ENCODE measurements at regions of chr14 and their contacts with region 1.

Region 1: DNA sequence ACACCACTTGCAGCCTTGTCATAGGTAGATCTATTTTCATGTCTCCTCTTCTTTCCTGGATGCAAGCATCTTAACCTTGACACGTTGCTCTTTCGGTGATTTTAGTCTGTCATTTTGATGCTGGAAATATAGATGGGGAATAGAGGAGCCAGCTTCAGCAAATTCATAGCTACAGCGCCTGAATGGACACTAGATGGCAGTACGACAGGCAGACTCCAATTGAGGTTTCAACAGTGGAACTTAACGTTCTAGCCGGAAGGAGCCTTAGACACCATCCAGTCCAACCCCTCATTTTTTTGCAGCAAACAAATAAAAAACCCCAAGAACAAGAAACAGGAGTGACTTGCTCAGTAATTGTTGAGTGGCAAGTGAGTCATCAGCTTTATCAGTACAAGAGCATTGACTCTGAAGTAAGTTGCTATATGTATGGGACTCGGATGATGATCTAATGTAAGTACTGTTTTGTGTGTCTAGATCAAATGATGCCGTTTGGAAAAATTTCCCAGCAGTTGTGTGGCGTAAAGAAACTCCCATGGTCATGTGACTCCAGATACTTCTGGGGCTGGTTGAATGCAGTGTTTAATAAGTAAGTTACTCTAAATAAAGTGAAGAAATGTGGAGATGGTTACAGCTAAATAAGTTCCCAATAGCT is 9.0 kb downstream of the DMAC2L start:
- DNase-seq: no peak
- ATAC-seq: peak; percentile 100
- H3K4me3 ChIP-seq: no peak overlapping the region
- H3K27ac ChIP-seq: peak overlapping the region; percentile 31
- H3K4me1 ChIP-seq: peaks cover 14% of the 10 kb centered on the region
- H3K27me3 ChIP-seq: no peaks in the 10 kb centered on the region
- CTCF ChIP-seq: peak; percentile 88

Region 2: DNA sequence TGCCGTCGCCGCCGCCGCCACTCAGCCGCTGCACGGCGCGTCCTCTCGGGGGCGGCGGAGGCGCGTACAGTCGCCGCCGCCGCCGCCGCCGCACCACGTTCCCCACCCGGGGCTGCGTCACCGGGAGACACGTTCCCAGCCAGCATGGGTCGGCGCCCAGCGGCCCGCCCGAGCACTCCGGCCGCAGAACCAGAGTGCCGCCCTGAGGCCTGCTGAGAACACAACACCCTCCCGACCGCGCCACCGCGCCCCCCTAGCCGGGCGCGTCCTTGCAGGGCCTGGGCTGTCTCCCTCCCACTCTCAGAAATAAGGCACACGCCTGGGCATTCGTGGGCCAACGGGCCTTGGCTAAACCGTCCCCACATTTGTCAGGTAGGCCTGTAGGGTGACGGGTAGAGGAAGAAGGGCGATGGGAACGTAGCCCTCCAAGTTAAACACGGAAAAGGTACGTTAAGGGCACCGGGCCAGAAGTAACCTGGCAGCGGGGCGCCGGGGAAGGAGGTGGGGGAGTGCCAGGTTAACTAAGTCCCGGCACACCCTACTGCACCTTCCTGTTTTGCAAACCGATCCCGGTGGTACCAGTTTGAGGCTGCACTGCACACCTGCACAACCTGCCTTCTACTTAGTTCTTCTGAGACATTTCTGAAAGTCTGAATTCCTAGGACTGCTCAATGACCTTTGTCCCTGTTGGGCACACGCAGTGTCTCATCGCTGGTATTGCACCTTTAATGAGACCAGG is 211.5 kb after region 1 on chr14 and contains the start of gene MAP4K5:
- intact Hi-C with region 1: loop called (anchors 10 kb)
- DNase-seq: peak; percentile 97
- ATAC-seq: peak; percentile 99
- H3K4me3 ChIP-seq: peak within 1 kb of the TSS; percentile 96
- H3K27ac ChIP-seq: peak within 1 kb of the TSS; percentile 96
- H3K4me1 ChIP-seq: peaks cover 42% of the 10 kb centered on the region
- H3K27me3 ChIP-seq: no peaks in the 10 kb centered on the region
- CTCF ChIP-seq: peak; percentile 89
- total RNA-seq, gene MAP4K5: 46.3 TPM